GM12878 (cell line): ENCODE measurements at regions of chr5 and their contacts with region 1.

Region 1: GRCh38 chr5:111211341-111211740 is 12.8 kb upstream of the CAMK4 start:
- DNase-seq: no peak
- ATAC-seq: peak; percentile 95
- H3K4me3 ChIP-seq: no peak overlapping the region
- H3K27ac ChIP-seq: no peak overlapping the region
- H3K4me1 ChIP-seq: no peaks in the 10 kb centered on the region
- H3K27me3 ChIP-seq: no peaks in the 10 kb centered on the region
- CTCF ChIP-seq: no peak
- EP300 ChIP-seq: no peak
- POLR2A ChIP-seq: no peak
- RAD21 ChIP-seq: no peak

Region 2: DNA sequence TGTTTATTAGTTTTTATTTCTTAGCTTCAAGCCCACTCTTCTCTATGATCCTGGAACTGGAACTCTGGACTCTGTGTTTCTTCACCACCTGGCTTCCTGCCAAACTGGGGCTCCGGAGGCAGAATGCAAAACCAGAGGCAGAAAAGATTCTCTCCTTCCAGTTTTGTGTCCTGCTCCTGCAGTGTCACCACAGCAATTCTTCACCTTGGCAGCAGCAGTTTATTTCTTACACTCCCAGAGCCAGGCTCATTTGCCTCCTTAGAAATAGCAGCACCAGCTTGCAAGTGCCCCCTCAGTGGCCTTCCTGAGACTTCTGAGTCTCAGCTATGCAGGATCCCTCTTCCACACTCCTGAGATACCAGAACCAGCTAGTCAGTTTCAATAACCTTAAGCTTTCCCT is 13.8 kb before region 1 on chr5:
- CTCF ChIA-PET with region 1: interaction called, 8 read pairs
- POLR2A ChIA-PET with region 1: interaction called, 4 read pairs
- RAD21 ChIA-PET with region 1: interaction called, 3 read pairs
- SMC1A ChIA-PET with region 1: interaction called, 13 read pairs
- in situ Hi-C with region 1: no loop called
- intact Hi-C with region 1: no loop called
- DNase-seq: no peak
- ATAC-seq: no peak
- H3K4me3 ChIP-seq: no peak overlapping the region
- H3K27ac ChIP-seq: no peak overlapping the region
- H3K4me1 ChIP-seq: peaks cover 13% of the 10 kb centered on the region
- H3K27me3 ChIP-seq: no peaks in the 10 kb centered on the region
- CTCF ChIP-seq: no peak
- EP300 ChIP-seq: no peak
- POLR2A ChIP-seq: no peak
- RAD21 ChIP-seq: no peak